CD8-positive, alpha-beta T cell (primary cell): ENCODE measurements at regions of chr11 and their contacts with region 1.

Region 1: GRCh38 chr11:75492181-75492820 is 33.4 kb downstream of the GDPD5 start:
- DNase-seq: peak; percentile 9 to 79 (median 65)
- ATAC-seq: peak; percentile 94
- H3K4me3 ChIP-seq: peak overlapping the region in 1 of 2 experiments; percentile 52
- H3K4me3 Mint-ChIP-seq: peak overlapping the region; percentile 50
- H3K27ac ChIP-seq: peak overlapping the region in 1 of 2 experiments; percentile 50
- H3K27ac Mint-ChIP-seq: peak overlapping the region; percentile 62
- H3K4me1 ChIP-seq: peaks cover 13% of the 10 kb centered on the region
- H3K4me1 Mint-ChIP-seq: peaks cover 14% of the 10 kb centered on the region
- H3K27me3 ChIP-seq: no peaks in the 10 kb centered on the region
- H3K27me3 Mint-ChIP-seq: no peaks in the 10 kb centered on the region
- CTCF ChIP-seq: no peak

Region 2: GRCh38 chr11:75474878-75475766 is 17.2 kb before region 1 on chr11:
- CTCF ChIA-PET with region 1: no interaction called
- POLR2A ChIA-PET with region 1: interaction called, 5 read pairs
- intact Hi-C with region 1: loop called in 1 of 2 experiments (anchors 2 kb)
- DNase-seq: peak; percentile 35 to 84 (median 72)
- ATAC-seq: peak; percentile 93
- H3K4me3 ChIP-seq: peak overlapping the region; percentile 4 to 20
- H3K4me3 Mint-ChIP-seq: peak overlapping the region; percentile 70
- H3K27ac ChIP-seq: peak overlapping the region; percentile 46 to 75
- H3K27ac Mint-ChIP-seq: peak overlapping the region; percentile 91
- H3K4me1 ChIP-seq: peaks cover 18% of the 10 kb centered on the region
- H3K4me1 Mint-ChIP-seq: peaks cover 19% of the 10 kb centered on the region
- H3K27me3 ChIP-seq: no peaks in the 10 kb centered on the region
- H3K27me3 Mint-ChIP-seq: no peaks in the 10 kb centered on the region
- CTCF ChIP-seq: no peak

Region 3: GRCh38 chr11:76293189-76293631 is 800.9 kb after region 1 on chr11:
- CTCF ChIA-PET with region 1: no interaction called
- POLR2A ChIA-PET with region 1: no interaction called
- intact Hi-C with region 1: loop called in 1 of 2 experiments (anchors 5 kb)
- DNase-seq: no peak
- ATAC-seq: peak; percentile 36
- H3K4me3 ChIP-seq: no peak overlapping the region
- H3K4me3 Mint-ChIP-seq: peak overlapping the region; percentile 47
- H3K27ac ChIP-seq: no peak overlapping the region
- H3K27ac Mint-ChIP-seq: peak overlapping the region; percentile 79
- H3K4me1 ChIP-seq: peaks cover 22% of the 10 kb centered on the region
- H3K4me1 Mint-ChIP-seq: peaks cover 25% of the 10 kb centered on the region
- H3K27me3 ChIP-seq: no peaks in the 10 kb centered on the region
- H3K27me3 Mint-ChIP-seq: no peaks in the 10 kb centered on the region
- CTCF ChIP-seq: no peak